ENCODE measurements at regions of chr1 and their contacts with region 1.

Region 1: DNA sequence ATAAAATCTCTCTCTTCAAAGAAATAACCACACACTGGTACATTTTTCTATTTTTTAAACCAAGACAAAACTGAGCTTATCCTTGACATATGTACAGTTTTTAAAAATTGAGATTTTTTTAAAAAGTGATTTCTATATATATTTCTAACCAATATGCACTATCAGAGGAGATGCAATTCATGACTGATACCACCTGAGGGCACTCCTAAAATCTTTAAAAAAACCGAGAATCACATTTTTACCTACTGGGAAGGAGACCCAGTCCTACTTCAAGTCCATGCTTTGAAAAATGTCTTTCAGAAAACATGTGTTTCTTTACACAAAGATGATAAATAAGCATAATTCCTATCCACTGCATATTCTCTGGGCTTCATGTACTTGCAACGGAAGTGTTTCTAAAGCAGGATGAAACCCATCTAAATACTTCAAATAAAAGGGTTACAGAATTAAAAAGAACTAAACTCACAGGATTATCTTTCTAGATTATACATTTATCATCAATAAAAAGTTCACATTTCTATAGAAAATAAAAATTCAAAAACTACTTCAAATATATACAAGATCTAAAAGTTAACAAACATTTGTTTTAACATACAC is 98.6 kb downstream of the ENAH start:
- DNase-seq: no peak
- ATAC-seq: no peak
- H3K4me3 Mint-ChIP-seq: no peak overlapping the region
- H3K27ac Mint-ChIP-seq: no peak overlapping the region
- H3K4me1 Mint-ChIP-seq: no peaks in the 10 kb centered on the region
- H3K27me3 Mint-ChIP-seq: peaks cover 4% of the 10 kb centered on the region
- CTCF ChIP-seq: no peak

Region 2: GRCh38 chr1:225652729-225653462 is 98.6 kb after region 1 on chr1 and contains the start of gene ENAH:
- CTCF ChIA-PET with region 1: interaction called, 3 read pairs
- POLR2A ChIA-PET with region 1: no interaction called
- intact Hi-C with region 1: loop called (anchors 10 kb)
- DNase-seq: peak; percentile 49
- ATAC-seq: peak; percentile 69
- H3K4me3 Mint-ChIP-seq: peak within 1 kb of the TSS; percentile 92
- H3K27ac Mint-ChIP-seq: peak within 1 kb of the TSS; percentile 24
- H3K4me1 Mint-ChIP-seq: peaks cover 13% of the 10 kb centered on the region
- H3K27me3 Mint-ChIP-seq: peaks cover 9% of the 10 kb centered on the region
- CTCF ChIP-seq: no peak
- total RNA-seq, gene ENAH: 1.2 and 1.4 TPM in 2 replicates

Region 3: DNA sequence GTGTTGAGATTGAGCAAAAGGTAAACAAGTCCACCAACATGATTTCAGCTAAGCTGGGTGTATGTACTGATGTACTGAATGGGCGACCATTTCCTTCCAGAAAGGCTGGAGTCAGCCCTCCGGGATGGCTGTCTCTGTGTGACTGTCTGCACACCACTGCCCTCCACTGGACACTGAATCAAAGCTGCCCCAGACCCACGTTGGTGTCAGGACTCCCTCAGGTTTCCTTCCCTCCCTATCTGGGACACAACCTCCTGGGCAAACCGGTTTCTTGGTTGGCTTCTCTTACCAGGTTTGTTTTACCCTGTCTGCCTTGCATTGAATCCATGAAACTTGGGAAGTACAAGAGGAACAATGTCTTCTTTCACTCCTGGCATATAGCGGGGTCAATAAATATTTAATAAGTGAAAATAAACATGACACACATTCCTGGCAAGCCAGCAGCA is 218.0 kb after region 1 on chr1:
- CTCF ChIA-PET with region 1: interaction called, 5 read pairs
- POLR2A ChIA-PET with region 1: no interaction called
- intact Hi-C with region 1: loop called (anchors 1 kb)
- DNase-seq: no peak
- ATAC-seq: peak; percentile 59
- H3K4me3 Mint-ChIP-seq: no peak overlapping the region
- H3K27ac Mint-ChIP-seq: no peak overlapping the region
- H3K4me1 Mint-ChIP-seq: peaks cover 7% of the 10 kb centered on the region
- H3K27me3 Mint-ChIP-seq: no peaks in the 10 kb centered on the region
- CTCF ChIP-seq: no peak

Region 4: DNA sequence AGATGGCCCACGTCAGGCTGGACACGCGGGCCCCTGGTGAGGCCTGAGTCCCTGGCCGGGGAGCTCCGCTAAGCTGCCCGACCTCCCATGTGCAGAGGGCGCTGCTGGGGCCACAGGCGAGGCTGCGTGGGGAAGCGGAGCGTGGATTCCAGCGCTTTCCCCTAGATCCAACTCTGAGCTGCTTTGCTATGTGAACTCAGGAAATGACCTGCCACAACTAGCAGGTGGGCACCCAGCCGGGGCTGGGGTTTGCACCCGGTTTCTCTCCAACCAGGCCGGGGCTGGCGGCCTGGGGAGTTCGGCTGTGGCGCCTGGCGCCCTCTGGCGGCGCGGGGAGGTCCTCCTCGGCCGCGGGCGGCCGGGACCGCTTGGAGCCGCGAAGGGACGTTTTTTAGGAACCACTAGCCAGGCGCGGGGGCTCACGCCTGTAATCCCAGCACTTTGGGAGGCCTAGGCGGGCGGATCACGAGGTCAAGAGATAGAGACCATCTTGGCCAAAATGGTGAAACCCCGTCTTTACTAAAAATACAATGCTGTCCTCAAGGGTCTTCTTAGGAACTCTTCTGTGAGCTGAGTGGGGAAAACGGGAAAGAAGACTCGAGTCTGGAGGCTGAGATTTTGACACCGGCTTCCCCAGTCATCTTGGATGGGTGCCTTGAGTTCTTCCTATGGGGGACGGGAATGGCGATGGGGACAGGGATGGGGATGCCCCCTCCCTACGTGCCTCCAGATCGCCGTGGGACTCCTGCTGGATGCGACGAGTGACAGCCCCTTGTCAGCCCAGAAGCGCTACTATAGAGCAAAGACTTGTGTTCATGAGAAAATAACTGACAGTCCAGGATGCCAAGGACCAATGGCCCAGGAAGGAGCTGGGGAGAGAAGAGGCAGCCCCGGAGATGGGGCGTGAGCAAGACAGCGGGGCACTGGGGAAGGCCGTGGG is 357.1 kb after region 1 on chr1:
- CTCF ChIA-PET with region 1: interaction called, 4 read pairs
- POLR2A ChIA-PET with region 1: no interaction called
- intact Hi-C with region 1: loop called (anchors 1 kb)
- DNase-seq: peak; percentile 66
- ATAC-seq: peak; percentile 90
- H3K4me3 Mint-ChIP-seq: no peak overlapping the region
- H3K27ac Mint-ChIP-seq: no peak overlapping the region
- H3K4me1 Mint-ChIP-seq: peaks cover 23% of the 10 kb centered on the region
- H3K27me3 Mint-ChIP-seq: no peaks in the 10 kb centered on the region
- CTCF ChIP-seq: peak; percentile 40